Activated T-helper 1 cell treated with anti-CD3 and anti-CD28 coated beads, Interleukin-12 subunit alpha, Interleukin-12 subunit beta, Interleukin-2, Interleukin-4 antibody, amounts not matched to agents 30 ng/mL and 10 ng/mL and 1 ng/mL, durations not matched to agents 14 hours and 24 hours and 36 hours (primary cell): ENCODE measurements at regions of chr17 and their contacts with region 1.

Region 1: GRCh38 chr17:80101011-80101945 is at the start of gene GAA:
- DNase-seq: peak; percentile 86
- H3K4me3 Mint-ChIP-seq: peak within 1 kb of the TSS; percentile 92
- H3K27ac Mint-ChIP-seq: peak within 1 kb of the TSS; percentile 82
- H3K4me1 Mint-ChIP-seq: peaks cover 26% of the 10 kb centered on the region
- H3K27me3 Mint-ChIP-seq: peaks cover 6% of the 10 kb centered on the region
- total RNA-seq, gene GAA: 12.3 and 13.1 TPM in 2 replicates

Region 2: GRCh38 chr17:80035943-80036714 is 65.1 kb before region 1 on chr17 and contains the start of gene CCDC40:
- intact Hi-C with region 1: loop called (anchors 2 kb)
- DNase-seq: peak; percentile 77
- H3K4me3 Mint-ChIP-seq: peak within 1 kb of the TSS; percentile 85
- H3K27ac Mint-ChIP-seq: peak within 1 kb of the TSS; percentile 91
- H3K4me1 Mint-ChIP-seq: peaks cover 5% of the 10 kb centered on the region
- H3K27me3 Mint-ChIP-seq: peaks cover 50% of the 10 kb centered on the region
- total RNA-seq, gene CCDC40: 0.15 and 0.16 TPM in 2 replicates

Region 3: DNA sequence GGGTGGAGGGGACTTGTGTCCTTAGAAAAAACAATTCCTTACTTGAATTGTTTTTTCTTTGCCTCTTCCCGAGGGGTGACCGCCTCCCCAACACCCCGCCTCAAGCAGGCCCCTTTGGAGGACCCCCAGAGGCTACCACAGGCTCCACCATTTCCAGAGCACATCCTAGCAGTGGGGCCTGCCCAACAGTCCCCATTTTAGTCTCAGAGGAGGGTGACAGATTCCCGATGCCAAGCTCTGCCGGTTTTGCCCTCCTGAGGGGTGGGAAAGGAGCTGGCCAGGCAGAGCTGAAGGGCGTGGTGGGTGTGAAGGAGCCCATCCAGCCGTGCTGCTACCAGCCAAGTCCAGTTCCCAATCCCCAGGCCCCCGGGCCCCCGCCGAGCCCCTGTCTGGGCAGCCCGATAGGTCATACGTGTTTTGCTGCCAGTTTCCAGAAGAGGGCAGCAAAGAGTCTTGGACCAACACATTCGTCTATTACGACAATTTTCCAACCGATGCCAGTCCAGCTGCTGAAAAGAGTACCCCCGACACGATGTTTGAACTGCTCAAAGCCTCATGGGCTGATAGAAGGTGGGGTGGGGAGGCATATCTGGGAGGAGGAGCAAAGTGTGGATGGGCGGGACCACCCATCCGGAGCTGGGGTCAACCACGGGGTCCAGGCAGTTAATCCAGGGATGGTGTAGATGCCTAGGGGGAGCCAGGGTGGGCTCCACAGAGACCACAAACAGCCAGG is 18.7 kb before region 1 on chr17:
- intact Hi-C with region 1: loop called (anchors 1 kb)
- DNase-seq: peak; percentile 29
- H3K4me3 Mint-ChIP-seq: no peak overlapping the region
- H3K27ac Mint-ChIP-seq: peak overlapping the region; percentile 42
- H3K4me1 Mint-ChIP-seq: peaks cover 5% of the 10 kb centered on the region
- H3K27me3 Mint-ChIP-seq: peaks cover 4% of the 10 kb centered on the region

Region 4: GRCh38 chr17:80263253-80264204 is 162.3 kb after region 1 on chr17:
- intact Hi-C with region 1: loop called (anchors 5 kb)
- DNase-seq: peak; percentile 89
- H3K4me3 Mint-ChIP-seq: peak overlapping the region; percentile 100
- H3K27ac Mint-ChIP-seq: peak overlapping the region; percentile 87
- H3K4me1 Mint-ChIP-seq: peaks cover 49% of the 10 kb centered on the region
- H3K27me3 Mint-ChIP-seq: no peaks in the 10 kb centered on the region

Region 5: GRCh38 chr17:80441133-80441578 is 339.9 kb after region 1 on chr17:
- intact Hi-C with region 1: no loop called
- DNase-seq: peak; percentile 36
- H3K4me3 Mint-ChIP-seq: no peak overlapping the region
- H3K27ac Mint-ChIP-seq: no peak overlapping the region
- H3K4me1 Mint-ChIP-seq: no peaks in the 10 kb centered on the region
- H3K27me3 Mint-ChIP-seq: peaks cover 4% of the 10 kb centered on the region